ENCODE measurements at regions of chr9 and their contacts with region 1.

Region 1: DNA sequence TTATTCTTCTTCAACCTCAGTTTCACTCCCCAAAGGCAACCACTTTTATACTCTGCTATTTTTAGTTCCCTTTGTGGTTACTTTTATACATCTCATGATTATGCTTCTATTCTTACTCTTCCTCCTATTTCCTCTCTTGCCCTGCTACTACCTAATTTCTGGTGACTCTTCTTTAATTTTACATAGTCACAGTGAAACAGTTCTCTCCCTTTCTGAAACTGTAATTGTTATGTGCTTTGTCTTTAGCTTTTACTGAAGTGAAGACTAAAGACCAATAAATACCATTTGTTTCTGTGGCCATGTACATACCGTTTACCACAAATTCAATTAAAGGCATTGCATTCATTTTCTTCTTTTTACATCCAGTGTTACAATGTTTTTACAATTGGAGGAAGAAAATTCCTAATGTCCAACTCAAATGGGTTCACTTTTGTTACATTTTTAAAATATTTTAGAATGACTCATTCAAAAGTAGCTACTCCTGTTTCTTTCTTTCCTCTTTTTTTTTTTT is 410.6 kb downstream of the PSAT1 start:
- DNase-seq: no peak
- H3K4me3 ChIP-seq: no peak overlapping the region
- H3K27ac ChIP-seq: no peak overlapping the region
- H3K4me1 ChIP-seq: no peaks in the 10 kb centered on the region
- H3K27me3 ChIP-seq: no peaks in the 10 kb centered on the region
- CTCF ChIP-seq: no peak
- EP300 ChIP-seq: no peak
- POLR2A ChIP-seq: no peak

Region 2: GRCh38 chr9:77024776-77025545 is 1682.6 kb before region 1 on chr9:
- intact Hi-C with region 1: no loop called
- DNase-seq: no peak
- H3K4me3 ChIP-seq: no peak overlapping the region
- H3K27ac ChIP-seq: no peak overlapping the region
- H3K4me1 ChIP-seq: peaks cover 6% of the 10 kb centered on the region
- H3K27me3 ChIP-seq: no peaks in the 10 kb centered on the region
- CTCF ChIP-seq: no peak
- EP300 ChIP-seq: no peak
- POLR2A ChIP-seq: no peak

Region 3: DNA sequence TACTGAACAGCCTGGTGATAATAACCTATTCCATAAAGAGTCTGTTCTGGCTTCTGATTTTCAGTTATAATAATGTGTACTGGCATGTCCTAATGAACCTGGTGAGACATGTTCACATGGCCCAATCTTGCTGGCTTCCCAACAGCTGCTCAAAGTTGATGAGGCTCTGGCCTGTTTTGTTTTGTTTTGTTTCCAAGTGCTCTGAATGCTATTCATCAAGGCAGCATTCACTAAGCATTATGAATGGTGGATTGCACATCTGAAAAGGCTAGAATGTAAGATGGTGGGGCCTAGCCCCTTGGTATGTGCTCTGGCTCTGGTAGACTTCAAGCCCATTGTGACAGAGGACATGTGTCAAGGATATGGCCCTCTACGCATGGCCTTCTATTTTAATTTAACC is 22.1 kb before region 1 on chr9:
- intact Hi-C with region 1: loop called in 1 of 4 experiments (anchors 1 kb)
- DNase-seq: no peak
- H3K4me3 ChIP-seq: no peak overlapping the region
- H3K27ac ChIP-seq: no peak overlapping the region
- H3K4me1 ChIP-seq: no peaks in the 10 kb centered on the region
- H3K27me3 ChIP-seq: no peaks in the 10 kb centered on the region
- CTCF ChIP-seq: no peak
- EP300 ChIP-seq: no peak
- POLR2A ChIP-seq: no peak

Region 4: GRCh38 chr9:78967557-78968212 is 260.1 kb after region 1 on chr9:
- intact Hi-C with region 1: no loop called
- DNase-seq: no peak
- H3K4me3 ChIP-seq: no peak overlapping the region
- H3K27ac ChIP-seq: no peak overlapping the region
- H3K4me1 ChIP-seq: no peaks in the 10 kb centered on the region
- H3K27me3 ChIP-seq: no peaks in the 10 kb centered on the region
- CTCF ChIP-seq: no peak
- EP300 ChIP-seq: no peak
- POLR2A ChIP-seq: no peak

Measured in ovary (tissue), 10 donors.